A673 (cell line): ENCODE measurements at regions of chr3 and their contacts with region 1.

Region 1: DNA sequence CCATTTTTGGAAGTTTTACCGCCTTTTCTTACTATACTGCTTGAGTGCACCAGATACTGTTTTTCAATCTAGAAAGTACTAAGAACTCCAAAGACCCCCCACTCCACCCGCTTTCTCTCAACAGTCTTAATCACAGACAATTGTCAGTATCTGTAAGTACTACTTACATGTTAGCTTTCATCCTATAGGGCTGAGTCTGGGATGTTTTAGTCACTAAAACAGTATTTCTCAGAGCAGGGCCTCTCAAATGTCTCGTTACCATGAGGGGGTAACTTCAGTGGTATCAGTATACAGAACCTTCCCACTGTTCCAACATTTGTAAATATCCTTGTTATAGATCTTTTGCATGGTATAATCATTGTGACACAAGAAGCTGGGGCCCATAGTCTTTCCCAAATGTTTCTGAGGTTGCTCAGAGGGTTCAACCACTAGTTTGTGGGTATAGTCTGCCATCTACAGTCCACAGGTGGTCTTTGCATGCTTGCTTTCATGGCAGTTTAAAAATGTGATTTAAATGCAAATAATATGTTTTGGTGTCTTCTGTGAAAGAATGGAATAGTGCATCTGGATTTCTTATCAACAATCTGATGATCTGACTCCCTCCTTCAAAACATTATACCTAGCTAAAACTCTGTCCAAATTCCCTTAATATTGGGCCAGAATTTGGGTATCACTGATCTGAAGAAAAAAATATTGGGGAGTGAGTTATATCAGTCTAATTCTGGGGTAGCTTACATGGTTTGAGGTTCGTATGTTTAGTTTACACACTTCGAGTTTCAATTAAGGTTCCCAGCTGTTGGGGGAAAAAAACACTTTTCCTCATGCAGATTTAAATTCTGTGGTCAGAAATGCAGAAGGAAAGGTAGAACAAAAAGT is 18.0 kb upstream of the DNAJC13 start:
- DNase-seq: peak; percentile 71
- H3K4me3 ChIP-seq: no peak overlapping the region
- H3K27ac ChIP-seq: no peak overlapping the region
- H3K4me1 ChIP-seq: peaks cover 4% of the 10 kb centered on the region
- H3K27me3 ChIP-seq: no peaks in the 10 kb centered on the region
- CTCF ChIP-seq: peak; percentile 88

Region 2: GRCh38 chr3:131402391-131403039 is 996.8 kb before region 1 on chr3:
- CTCF ChIA-PET with region 1: no interaction called
- POLR2A ChIA-PET with region 1: no interaction called
- intact Hi-C with region 1: no loop called
- DNase-seq: peak; percentile 19
- H3K4me3 ChIP-seq: no peak overlapping the region
- H3K27ac ChIP-seq: no peak overlapping the region
- H3K4me1 ChIP-seq: no peaks in the 10 kb centered on the region
- H3K27me3 ChIP-seq: no peaks in the 10 kb centered on the region
- CTCF ChIP-seq: no peak

Region 3: DNA sequence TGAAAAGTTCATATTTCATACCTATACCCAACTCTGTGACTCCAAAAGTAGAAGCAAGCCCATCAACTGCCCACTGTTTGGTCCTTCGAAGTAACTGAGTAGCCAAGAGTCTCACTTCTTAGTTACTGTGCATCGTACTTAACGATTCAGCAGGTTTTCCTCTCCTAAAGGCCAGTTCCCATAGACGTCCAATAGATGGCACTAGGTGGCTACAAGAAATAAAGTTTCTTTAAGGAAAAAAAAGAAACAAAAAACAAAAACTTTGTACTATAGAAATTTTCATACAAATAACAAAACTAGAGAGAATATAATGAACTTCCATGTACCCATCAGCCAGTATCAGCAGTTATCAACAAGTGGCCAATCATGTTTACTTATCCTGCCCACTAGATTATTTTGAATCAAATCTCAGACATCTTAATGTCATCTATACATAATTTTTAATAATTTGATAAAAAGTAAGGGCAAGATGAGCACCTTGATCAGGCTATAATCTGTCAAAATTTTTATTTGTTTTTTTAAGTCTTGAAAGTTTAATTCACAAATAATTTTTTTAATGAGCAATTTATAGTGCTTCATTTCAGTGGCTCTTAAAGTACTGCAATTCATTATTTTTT is 145.9 kb before region 1 on chr3:
- CTCF ChIA-PET with region 1: no interaction called
- POLR2A ChIA-PET with region 1: no interaction called
- intact Hi-C with region 1: loop called (anchors 2 kb)
- DNase-seq: peak; percentile 79
- H3K4me3 ChIP-seq: no peak overlapping the region
- H3K27ac ChIP-seq: no peak overlapping the region
- H3K4me1 ChIP-seq: peaks cover 8% of the 10 kb centered on the region
- H3K27me3 ChIP-seq: no peaks in the 10 kb centered on the region
- CTCF ChIP-seq: peak; percentile 78

Region 4: DNA sequence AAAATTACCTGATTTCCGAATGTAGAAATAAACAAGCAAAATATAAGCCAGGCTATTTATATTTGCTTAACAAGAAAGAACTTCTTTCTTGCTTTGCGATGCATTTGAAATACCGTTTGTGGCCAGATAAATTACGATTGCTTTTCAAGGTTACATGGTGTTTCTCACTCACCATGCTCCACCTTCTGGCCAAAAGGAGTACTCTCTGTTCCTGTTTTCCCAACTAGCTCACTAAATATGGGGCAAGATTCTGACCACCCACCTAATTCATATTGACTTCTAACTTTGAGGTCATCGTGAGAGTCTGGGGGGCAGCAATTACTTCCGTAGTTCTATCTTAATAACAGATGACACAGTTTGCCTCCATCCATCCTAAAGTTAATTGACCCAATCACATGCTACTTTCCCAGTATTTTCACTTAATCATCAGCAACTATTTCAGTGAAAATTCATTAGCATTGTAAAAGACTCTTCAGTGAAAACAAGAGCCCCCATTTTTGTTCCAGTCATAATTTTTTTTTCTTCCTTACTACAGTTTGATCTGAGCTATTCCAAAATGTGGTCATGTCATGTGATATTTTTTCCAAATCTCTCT is 56.2 kb before region 1 on chr3:
- CTCF ChIA-PET with region 1: no interaction called
- POLR2A ChIA-PET with region 1: no interaction called
- intact Hi-C with region 1: loop called (anchors 1 kb)
- DNase-seq: peak; percentile 75
- H3K4me3 ChIP-seq: no peak overlapping the region
- H3K27ac ChIP-seq: no peak overlapping the region
- H3K4me1 ChIP-seq: no peaks in the 10 kb centered on the region
- H3K27me3 ChIP-seq: no peaks in the 10 kb centered on the region
- CTCF ChIP-seq: peak; percentile 87

Region 5: GRCh38 chr3:132352541-132353143 is 46.6 kb before region 1 on chr3:
- CTCF ChIA-PET with region 1: interaction called, 9 read pairs
- POLR2A ChIA-PET with region 1: no interaction called
- intact Hi-C with region 1: loop called (anchors 2 kb)
- DNase-seq: peak; percentile 77
- H3K4me3 ChIP-seq: no peak overlapping the region
- H3K27ac ChIP-seq: no peak overlapping the region
- H3K4me1 ChIP-seq: no peaks in the 10 kb centered on the region
- H3K27me3 ChIP-seq: no peaks in the 10 kb centered on the region
- CTCF ChIP-seq: peak; percentile 92

Region 6: DNA sequence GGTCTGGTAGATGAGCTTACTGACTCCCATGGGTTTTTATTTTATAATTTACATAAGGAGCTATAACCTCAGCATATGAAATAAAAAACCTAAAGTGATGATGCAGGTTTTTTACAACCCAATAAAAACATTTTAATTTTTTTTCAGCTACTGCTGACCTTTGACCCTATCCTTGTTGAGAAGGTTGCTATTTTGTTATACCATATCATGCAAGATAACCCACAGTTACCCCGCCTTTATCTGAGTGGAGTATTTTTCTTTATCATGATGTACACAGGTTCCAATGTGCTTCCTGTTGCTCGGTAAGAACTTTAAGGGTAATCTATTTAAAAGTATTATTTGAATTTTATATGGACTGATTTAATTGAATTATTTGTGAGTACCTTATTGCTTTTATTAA is 88.9 kb after region 1 on chr3:
- CTCF ChIA-PET with region 1: no interaction called
- POLR2A ChIA-PET with region 1: no interaction called
- intact Hi-C with region 1: no loop called
- DNase-seq: no peak
- H3K4me3 ChIP-seq: no peak overlapping the region
- H3K27ac ChIP-seq: no peak overlapping the region
- H3K4me1 ChIP-seq: no peaks in the 10 kb centered on the region
- H3K27me3 ChIP-seq: no peaks in the 10 kb centered on the region
- CTCF ChIP-seq: no peak